ENCODE measurements at regions of chr17 and their contacts with region 1.

Region 1: GRCh38 chr17:57833179-57833939 is 16.5 kb downstream of the MRPS23 start:
- DNase-seq: peak; percentile 55 to 74
- ATAC-seq: peak; percentile 74 to 91 (median 86)
- H3K4me3 ChIP-seq: peak overlapping the region in 9 of 10 donors; percentile 8 to 53 (median 50)
- H3K27ac ChIP-seq: peak overlapping the region; percentile 65 to 91 (median 84)
- H3K4me1 ChIP-seq: peaks cover 0 to 52% (median 20%) of the 10 kb centered on the region in 9 donors
- H3K27me3 ChIP-seq: no peaks in the 10 kb centered on the region
- CTCF ChIP-seq: peak; percentile 82 to 97 (median 92)

Region 2: DNA sequence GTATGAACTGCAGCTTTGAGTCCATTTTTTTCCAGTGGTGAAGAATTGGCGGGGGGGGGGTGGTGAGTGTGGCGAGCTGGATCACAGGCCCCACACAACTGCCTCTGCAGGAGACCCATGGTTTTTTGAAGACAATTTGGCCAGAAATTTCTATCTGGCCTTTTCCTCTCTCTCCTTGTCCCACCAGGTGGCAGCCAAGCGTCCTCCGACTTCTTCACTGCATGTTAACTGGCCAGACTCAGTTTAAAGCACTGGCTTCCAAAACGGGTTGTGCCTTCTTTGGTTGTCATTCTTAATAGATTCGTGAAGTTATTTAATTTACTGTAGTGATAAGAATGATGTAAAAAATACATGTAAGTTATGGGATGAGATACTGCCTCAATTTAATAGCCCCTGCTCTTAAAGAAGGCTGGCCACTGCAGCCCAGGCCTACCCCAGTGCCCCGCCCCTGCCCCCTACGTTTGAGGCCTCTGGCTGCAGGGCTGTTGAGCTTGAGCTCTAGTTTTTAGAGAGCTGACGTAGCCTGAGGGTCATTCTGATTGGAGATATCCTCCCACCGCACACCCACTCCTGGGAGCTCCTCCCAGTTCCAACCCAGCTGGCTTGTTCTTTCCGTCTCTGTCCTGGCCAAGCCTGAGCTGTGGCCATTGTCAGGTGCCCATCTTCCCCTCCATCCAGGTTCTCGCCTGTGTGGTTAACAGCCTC is 711.9 kb before region 1 on chr17:
- intact Hi-C with region 1: loop called in 6 of 10 experiments (anchors 5 to 10 kb)
- DNase-seq: peak in 1 of 2 donors; percentile 29
- ATAC-seq: peak in 5 of 8 donors; percentile 40 to 59 (median 52)
- H3K4me3 ChIP-seq: no peak overlapping the region
- H3K27ac ChIP-seq: peak overlapping the region in 1 of 10 donors; percentile 4
- H3K4me1 ChIP-seq: peaks cover 0 to 14% (median 0%) of the 10 kb centered on the region in 9 donors
- H3K27me3 ChIP-seq: no peaks in the 10 kb centered on the region
- CTCF ChIP-seq: peak in 8 of 9 donors; percentile 17 to 60 (median 48)

Region 3: DNA sequence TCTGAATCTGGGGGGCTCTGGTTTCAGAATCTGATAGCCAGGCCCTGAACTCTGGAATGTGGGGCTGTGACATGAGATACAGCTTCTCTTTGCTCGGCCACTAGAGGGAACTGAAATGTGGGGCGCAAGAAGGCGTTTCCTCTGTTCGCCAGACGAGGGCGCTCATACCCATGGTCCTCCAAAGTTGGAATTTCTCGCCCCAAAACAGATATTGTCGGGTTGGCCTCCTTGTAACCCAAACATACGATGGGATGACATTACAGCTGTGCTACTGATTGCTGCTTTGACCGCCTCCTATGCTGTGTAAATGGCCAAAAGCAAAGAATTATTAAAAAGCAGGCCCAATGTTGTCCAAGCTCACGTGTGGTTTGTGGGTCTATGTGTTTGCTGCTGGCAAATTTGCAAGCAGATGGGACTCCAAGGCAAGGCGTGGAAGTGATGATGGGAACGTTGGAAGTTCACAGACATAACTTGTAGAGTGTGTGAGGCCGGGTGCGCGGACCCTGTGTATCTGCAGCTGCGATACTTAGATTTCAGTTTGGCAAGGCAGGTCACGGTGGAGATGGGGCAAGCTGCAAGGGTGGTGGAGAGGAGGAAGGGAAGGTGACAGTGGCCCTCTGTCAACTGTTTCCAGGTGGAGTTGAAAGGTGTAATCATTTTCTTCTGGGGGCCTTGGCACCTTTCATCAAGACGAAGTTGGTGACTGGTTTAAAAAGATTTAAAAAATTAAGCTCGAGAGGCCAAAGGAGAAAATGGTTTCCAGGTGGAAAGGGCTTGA is 590.0 kb before region 1 on chr17:
- intact Hi-C with region 1: loop called in 4 of 10 experiments (anchors 2 to 10 kb)
- DNase-seq: peak; percentile 63 to 67
- ATAC-seq: peak; percentile 37 to 86 (median 72)
- H3K4me3 ChIP-seq: no peak overlapping the region
- H3K27ac ChIP-seq: peak overlapping the region in 4 of 10 donors; percentile 19 to 37 (median 27)
- H3K4me1 ChIP-seq: peaks cover 0 to 17% (median 13%) of the 10 kb centered on the region in 9 donors
- H3K27me3 ChIP-seq: no peaks in the 10 kb centered on the region
- CTCF ChIP-seq: peak; percentile 97 to 99 (median 98)

Region 4: GRCh38 chr17:57455063-57455914 is 378.1 kb before region 1 on chr17:
- intact Hi-C with region 1: loop called in 1 of 10 experiments (anchors 10 kb)
- DNase-seq: no peak
- ATAC-seq: peak in 6 of 8 donors; percentile 20 to 38 (median 28)
- H3K4me3 ChIP-seq: no peak overlapping the region
- H3K27ac ChIP-seq: peak overlapping the region in 9 of 10 donors; percentile 25 to 80 (median 56)
- H3K4me1 ChIP-seq: peaks cover 0 to 67% (median 39%) of the 10 kb centered on the region in 9 donors
- H3K27me3 ChIP-seq: no peaks in the 10 kb centered on the region
- CTCF ChIP-seq: no peak

Region 5: GRCh38 chr17:57604771-57605674 is 228.3 kb before region 1 on chr17:
- intact Hi-C with region 1: loop called in 4 of 10 experiments (anchors 5 to 10 kb)
- DNase-seq: peak; percentile 50 to 73
- ATAC-seq: peak; percentile 73 to 88 (median 82)
- H3K4me3 ChIP-seq: peak overlapping the region in 5 of 10 donors; percentile 1 to 27 (median 25)
- H3K27ac ChIP-seq: peak overlapping the region; percentile 70 to 95 (median 87)
- H3K4me1 ChIP-seq: peaks cover 15 to 65% (median 50%) of the 10 kb centered on the region in 9 donors
- H3K27me3 ChIP-seq: no peaks in the 10 kb centered on the region
- CTCF ChIP-seq: peak in 1 of 9 donors; percentile 21

Region 6: DNA sequence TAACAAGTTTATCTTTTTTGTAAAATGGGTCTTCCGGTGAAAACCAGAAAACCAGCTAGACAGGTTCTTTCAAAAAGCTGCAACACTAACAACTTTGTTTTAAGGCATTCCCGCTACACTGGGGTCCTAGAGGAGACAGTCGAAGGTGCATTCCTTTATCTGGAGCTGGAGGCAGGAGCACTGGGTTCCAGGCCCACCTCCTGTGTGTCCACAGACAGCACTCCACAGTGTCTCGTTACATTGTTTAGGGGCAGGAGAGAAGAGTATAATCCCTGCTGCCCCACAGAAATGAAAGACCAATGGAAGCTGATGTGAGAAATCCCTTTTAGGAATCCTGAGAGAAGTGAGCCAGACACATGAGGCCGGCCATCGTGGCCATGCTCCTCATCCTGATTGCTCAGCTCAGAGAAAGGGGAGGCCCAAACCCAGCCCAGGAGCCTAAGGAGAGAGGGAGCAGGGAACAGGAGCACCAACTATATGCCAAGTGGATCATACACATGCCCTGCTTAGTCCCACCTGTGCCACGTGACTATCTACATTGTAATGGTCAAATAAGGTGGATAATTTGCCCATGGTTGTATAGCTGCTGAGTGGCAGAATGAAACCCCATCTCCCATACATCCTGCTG is 147.7 kb before region 1 on chr17:
- intact Hi-C with region 1: loop called in 1 of 10 experiments (anchors 10 kb)
- DNase-seq: no peak
- ATAC-seq: peak in 1 of 8 donors; percentile 30
- H3K4me3 ChIP-seq: no peak overlapping the region
- H3K27ac ChIP-seq: no peak overlapping the region
- H3K4me1 ChIP-seq: no peaks in the 10 kb centered on the region
- H3K27me3 ChIP-seq: no peaks in the 10 kb centered on the region
- CTCF ChIP-seq: no peak

Region 7: DNA sequence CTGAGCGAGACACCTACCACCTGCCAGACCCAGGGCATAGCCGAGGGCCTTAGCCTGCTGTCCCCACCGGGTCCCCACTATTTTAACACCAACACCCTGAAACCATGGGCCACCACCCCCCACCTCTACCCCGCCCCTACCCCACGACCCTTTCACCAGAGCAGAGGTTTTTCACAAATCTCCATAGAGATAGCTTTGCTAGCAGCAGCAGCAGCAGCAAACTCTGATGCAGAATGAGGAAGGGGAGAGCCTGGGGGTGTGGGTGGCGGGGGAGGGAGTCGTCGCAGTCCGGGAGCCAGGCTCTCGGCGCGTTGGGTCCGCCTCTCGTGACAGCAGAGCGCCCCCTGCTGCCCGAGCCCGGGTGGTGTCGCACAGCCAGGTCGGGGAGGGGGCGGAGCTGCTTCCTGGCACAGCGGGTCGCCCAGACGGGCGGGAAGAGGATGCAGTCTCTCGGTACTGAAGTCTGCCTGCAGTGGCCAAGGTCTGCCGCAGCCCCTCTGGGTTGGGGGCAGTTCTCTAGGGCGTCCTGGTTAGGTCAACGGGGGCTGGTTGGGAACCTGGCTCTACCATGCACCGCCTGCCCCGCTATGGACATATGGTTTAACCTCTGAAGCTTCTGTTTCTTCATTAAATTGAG is 50.1 kb before region 1 on chr17:
- intact Hi-C with region 1: loop called in 1 of 10 experiments (anchors 5 kb)
- DNase-seq: peak; percentile 61 to 78
- ATAC-seq: peak; percentile 66 to 76 (median 72)
- H3K4me3 ChIP-seq: peak overlapping the region in 5 of 10 donors; percentile 8 to 29 (median 12)
- H3K27ac ChIP-seq: peak overlapping the region in 4 of 10 donors; percentile 46 to 67 (median 56)
- H3K4me1 ChIP-seq: peaks cover 6 to 47% (median 24%) of the 10 kb centered on the region in 9 donors
- H3K27me3 ChIP-seq: peaks cover 0 to 7% (median 0%) of the 10 kb centered on the region in 7 donors
- CTCF ChIP-seq: peak; percentile 44 to 92 (median 86)